Activated naive CD4-positive, alpha-beta T cell treated with anti-CD3 and anti-CD28 coated beads, Interleukin-2, amount 10 ng/mL, durations not matched to agents 7 days and 5 days (primary cell): ENCODE measurements at regions of chr2 and their contacts with region 1.

Region 1: GRCh38 chr2:197242719-197243118 is 67.9 kb downstream of the ANKRD44 start:
- DNase-seq: no peak
- H3K4me3 Mint-ChIP-seq: no peak overlapping the region
- H3K27ac Mint-ChIP-seq: peak overlapping the region; percentile 38
- H3K4me1 Mint-ChIP-seq: peaks cover 82% of the 10 kb centered on the region
- H3K27me3 Mint-ChIP-seq: no peaks in the 10 kb centered on the region

Region 2: DNA sequence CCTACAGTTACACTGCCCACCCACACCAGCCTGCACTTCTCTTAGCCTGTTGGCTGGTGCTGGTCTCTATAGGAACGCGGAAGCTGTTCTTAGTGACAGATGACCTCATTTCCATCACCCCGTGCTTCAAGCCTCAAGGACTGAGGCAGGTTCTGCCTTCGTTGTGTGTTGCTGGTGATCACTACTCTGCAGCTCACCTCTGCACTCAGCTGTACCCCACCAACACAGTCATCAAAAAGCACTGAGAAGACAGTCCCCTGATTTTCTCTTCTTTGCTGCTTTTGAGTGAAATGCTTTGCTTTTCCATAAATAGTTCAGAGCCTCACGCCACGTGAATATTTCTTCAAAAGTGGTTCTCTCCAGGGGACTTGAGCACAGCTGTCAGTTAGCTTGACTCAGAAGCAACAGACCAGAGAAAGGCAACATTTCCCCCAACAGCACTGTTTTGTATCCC is 828.9 kb before region 1 on chr2:
- CTCF ChIA-PET with region 1: no interaction called
- DNase-seq: no peak
- H3K4me3 Mint-ChIP-seq: no peak overlapping the region
- H3K27ac Mint-ChIP-seq: no peak overlapping the region
- H3K4me1 Mint-ChIP-seq: peaks cover 9% of the 10 kb centered on the region
- H3K27me3 Mint-ChIP-seq: peaks cover 22% of the 10 kb centered on the region

Region 3: GRCh38 chr2:197255543-197255942 is 12.8 kb after region 1 on chr2:
- CTCF ChIA-PET with region 1: interaction called, 11 read pairs
- DNase-seq: peak; percentile 81
- H3K4me3 Mint-ChIP-seq: peak overlapping the region; percentile 74
- H3K27ac Mint-ChIP-seq: peak overlapping the region; percentile 95
- H3K4me1 Mint-ChIP-seq: peaks cover 72% of the 10 kb centered on the region
- H3K27me3 Mint-ChIP-seq: no peaks in the 10 kb centered on the region

Region 4: DNA sequence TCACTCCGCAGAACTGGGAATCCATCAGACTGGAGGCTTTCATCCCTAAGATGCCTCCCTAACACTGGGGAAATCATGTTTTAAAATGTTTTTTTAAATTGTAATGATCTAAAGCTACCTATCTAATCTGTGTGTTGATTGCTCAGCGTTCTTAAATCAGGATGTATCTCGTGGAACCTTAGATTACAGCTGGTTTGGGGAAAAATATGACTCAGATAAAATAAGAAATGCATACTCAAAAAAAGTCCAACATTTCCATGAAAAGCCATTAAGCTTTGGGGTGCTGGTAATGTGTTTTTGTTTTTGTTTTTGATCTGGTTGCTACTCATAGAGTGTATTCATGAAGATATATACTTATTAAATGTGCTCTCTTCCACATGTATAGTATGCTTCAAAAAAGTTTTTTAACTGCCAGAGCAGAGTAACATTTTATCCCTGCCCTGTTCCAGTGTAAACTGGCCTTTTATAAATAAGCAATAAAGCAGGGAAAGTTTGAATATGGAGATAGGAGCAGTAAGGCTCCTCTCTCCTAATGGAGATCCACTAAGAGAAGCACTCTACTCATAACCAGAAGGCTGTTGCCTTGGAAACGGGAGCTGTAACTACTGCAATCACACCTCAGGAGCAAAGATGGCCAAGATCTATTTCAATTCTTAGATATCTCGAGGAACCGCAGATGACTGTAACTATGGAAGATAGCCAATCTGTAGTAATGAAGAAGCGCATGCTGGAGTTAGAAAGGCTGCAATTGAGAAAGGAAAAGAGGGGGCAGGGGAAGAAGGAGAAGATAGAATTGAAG is 26.3 kb after region 1 on chr2:
- CTCF ChIA-PET with region 1: no interaction called
- DNase-seq: no peak
- H3K4me3 Mint-ChIP-seq: no peak overlapping the region
- H3K27ac Mint-ChIP-seq: no peak overlapping the region
- H3K4me1 Mint-ChIP-seq: peaks cover 90% of the 10 kb centered on the region
- H3K27me3 Mint-ChIP-seq: no peaks in the 10 kb centered on the region